ENCODE measurements at regions of chr5 and their contacts with region 1.

Region 1: GRCh38 chr5:657570-657969 is 35.6 kb downstream of the TPPP start:
- DNase-seq: peak in 1 of 2 experiments; percentile 75
- H3K4me3 ChIP-seq: no peak overlapping the region
- H3K27ac ChIP-seq: no peak overlapping the region
- H3K4me1 ChIP-seq: no peaks in the 10 kb centered on the region
- H3K27me3 ChIP-seq: no peaks in the 10 kb centered on the region
- CTCF ChIP-seq: no peak

Region 2: GRCh38 chr5:619441-619840 is 38.1 kb before region 1 on chr5:
- CTCF ChIA-PET with region 1: interaction called, 10 read pairs
- POLR2A ChIA-PET with region 1: interaction called, 16 read pairs
- intact Hi-C with region 1: no loop called
- DNase-seq: no peak
- H3K4me3 ChIP-seq: no peak overlapping the region
- H3K27ac ChIP-seq: no peak overlapping the region
- H3K4me1 ChIP-seq: peaks cover 5% of the 10 kb centered on the region
- H3K27me3 ChIP-seq: no peaks in the 10 kb centered on the region
- CTCF ChIP-seq: no peak

Region 3: DNA sequence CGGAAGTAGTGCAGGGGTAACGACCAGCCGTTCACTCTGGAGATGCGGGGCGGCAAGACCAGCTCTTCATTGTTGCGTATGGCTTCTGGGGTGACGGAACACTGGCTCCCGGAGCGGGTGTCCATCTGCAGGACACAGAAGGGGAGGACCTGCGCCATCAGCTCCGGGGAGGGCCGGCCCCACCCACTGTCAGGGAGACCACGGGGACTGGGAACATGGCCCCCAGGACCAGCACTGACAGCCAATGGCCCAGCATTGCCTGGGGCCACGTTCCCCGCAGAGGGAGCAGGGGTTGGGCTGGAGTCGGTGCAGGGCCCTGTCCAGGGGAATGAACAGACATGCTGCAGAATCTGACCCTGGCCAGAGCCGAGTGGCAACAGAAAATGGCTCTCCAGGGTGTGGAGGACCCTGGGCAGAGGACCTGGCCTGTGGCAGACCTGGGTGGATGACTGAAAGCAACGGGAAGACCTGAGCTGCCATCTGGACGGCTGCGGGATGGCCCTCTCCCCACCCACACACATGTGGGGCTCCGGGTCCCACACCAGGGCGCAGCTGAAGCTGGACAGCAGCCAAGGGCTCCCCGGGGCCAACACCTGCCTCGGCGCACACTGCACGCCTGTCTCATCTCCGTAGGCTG is 109.3 kb after region 1 on chr5:
- CTCF ChIA-PET with region 1: no interaction called
- POLR2A ChIA-PET with region 1: no interaction called
- intact Hi-C with region 1: no loop called
- DNase-seq: no peak
- H3K4me3 ChIP-seq: no peak overlapping the region
- H3K27ac ChIP-seq: no peak overlapping the region
- H3K4me1 ChIP-seq: no peaks in the 10 kb centered on the region
- H3K27me3 ChIP-seq: peaks cover 67% of the 10 kb centered on the region
- CTCF ChIP-seq: no peak